ENCODE measurements at regions of chr17 and their contacts with region 1.

Region 1: DNA sequence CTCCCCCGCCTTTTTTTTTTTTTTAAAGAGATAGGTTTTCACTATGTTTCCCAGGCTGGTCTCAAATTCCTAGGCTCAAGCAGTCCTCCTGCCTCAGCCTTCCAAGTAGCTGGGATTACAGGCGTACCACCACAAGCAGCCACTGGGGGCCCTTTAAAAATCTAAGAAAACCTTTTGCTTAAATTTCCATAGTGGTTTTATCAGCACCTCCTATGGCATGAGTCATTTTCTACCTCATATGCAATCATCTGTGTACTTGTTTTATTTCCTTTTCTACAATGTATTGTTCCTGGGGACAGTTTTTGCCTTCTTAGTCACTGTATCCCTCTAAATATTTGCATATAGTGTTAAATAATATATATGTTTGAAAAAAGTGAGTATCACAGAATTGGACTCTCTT is 29.2 kb downstream of the GNA13 start:
- DNase-seq: peak; percentile 45
- ATAC-seq: peak; percentile 66
- H3K4me3 ChIP-seq: no peak overlapping the region
- H3K27ac ChIP-seq: peak overlapping the region; percentile 84
- H3K4me1 ChIP-seq: peaks cover 70% of the 10 kb centered on the region
- H3K27me3 ChIP-seq: no peaks in the 10 kb centered on the region
- CTCF ChIP-seq: peak; percentile 16 to 45 (median 42); a peak in 4 of 6 replicates
- EP300 ChIP-seq: peak; percentile 47; a peak in 2 of 4 replicates
- POLR2A ChIP-seq: no peak
- RAD21 ChIP-seq: peak; percentile 46

Region 2: GRCh38 chr17:64968652-64969501 is 58.4 kb before region 1 on chr17:
- CTCF ChIA-PET with region 1: interaction called, 6 read pairs
- POLR2A ChIA-PET with region 1: interaction called, 4 read pairs
- RAD21 ChIA-PET with region 1: interaction called, 20 read pairs
- SMC1A ChIA-PET with region 1: interaction called, 11 read pairs
- in situ Hi-C with region 1: no loop called
- intact Hi-C with region 1: no loop called
- DNase-seq: peak; percentile 20
- ATAC-seq: peak; percentile 66
- H3K4me3 ChIP-seq: no peak overlapping the region
- H3K27ac ChIP-seq: peak overlapping the region; percentile 45
- H3K4me1 ChIP-seq: peaks cover 42% of the 10 kb centered on the region
- H3K27me3 ChIP-seq: no peaks in the 10 kb centered on the region
- CTCF ChIP-seq: no peak
- EP300 ChIP-seq: no peak
- POLR2A ChIP-seq: no peak
- RAD21 ChIP-seq: no peak

Region 3: DNA sequence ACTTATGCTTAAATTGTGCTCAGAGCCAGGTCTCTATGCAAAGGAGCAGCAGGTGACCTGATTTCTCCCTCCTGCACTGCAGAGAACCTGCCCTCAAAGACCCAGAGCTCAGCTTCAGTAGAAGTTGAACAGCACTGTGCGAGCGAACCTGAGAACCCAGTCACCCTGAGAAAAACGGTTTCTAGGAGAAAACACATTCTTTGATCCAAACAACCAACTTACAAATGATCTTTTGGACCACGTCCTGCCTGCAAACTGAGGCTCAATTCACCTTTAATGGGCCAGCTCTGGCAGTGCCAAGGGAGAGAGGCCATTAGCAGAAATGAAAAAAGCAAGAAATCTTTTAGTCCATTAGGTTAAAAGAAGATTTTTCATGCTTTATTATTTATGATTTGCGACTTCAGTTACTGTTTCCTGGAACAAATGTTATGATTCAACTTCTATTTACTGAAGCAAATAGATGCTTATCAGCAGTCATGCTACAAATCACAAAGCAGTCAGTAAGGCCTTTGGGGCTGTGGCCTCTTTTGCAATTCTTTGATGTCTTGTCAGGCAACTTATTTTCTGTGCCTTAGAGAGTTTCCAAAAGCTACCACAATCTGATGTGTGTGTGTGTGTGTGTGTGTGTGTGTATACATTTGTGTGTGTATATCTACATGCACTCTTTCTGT is 42.3 kb before region 1 on chr17:
- CTCF ChIA-PET with region 1: interaction called, 8 read pairs
- POLR2A ChIA-PET with region 1: interaction called, 25 read pairs
- RAD21 ChIA-PET with region 1: interaction called, 71 read pairs
- SMC1A ChIA-PET with region 1: interaction called, 52 read pairs
- in situ Hi-C with region 1: no loop called
- intact Hi-C with region 1: no loop called
- DNase-seq: no peak
- ATAC-seq: peak; percentile 17
- H3K4me3 ChIP-seq: no peak overlapping the region
- H3K27ac ChIP-seq: peak overlapping the region; percentile 100
- H3K4me1 ChIP-seq: peaks cover 29% of the 10 kb centered on the region
- H3K27me3 ChIP-seq: no peaks in the 10 kb centered on the region
- CTCF ChIP-seq: no peak
- EP300 ChIP-seq: 0 out of 4 replicates have a peak, but pooled peaks of 1 of the 2 experiments have one; percentile 15
- POLR2A ChIP-seq: 0 out of 2 replicates have a peak, but pooled peaks have one; percentile 30
- RAD21 ChIP-seq: no peak

Region 4: GRCh38 chr17:65039336-65039988 is 12.2 kb after region 1 on chr17:
- CTCF ChIA-PET with region 1: interaction called, 7 read pairs
- POLR2A ChIA-PET with region 1: interaction called, 24 read pairs
- RAD21 ChIA-PET with region 1: interaction called, 27 read pairs
- SMC1A ChIA-PET with region 1: interaction called, 84 read pairs
- in situ Hi-C with region 1: no loop called
- intact Hi-C with region 1: loop called (anchors 2 kb)
- DNase-seq: peak; percentile 68
- ATAC-seq: peak; percentile 85
- H3K4me3 ChIP-seq: peak overlapping the region; percentile 10
- H3K27ac ChIP-seq: peak overlapping the region; percentile 87
- H3K4me1 ChIP-seq: peaks cover 56% of the 10 kb centered on the region
- H3K27me3 ChIP-seq: no peaks in the 10 kb centered on the region
- CTCF ChIP-seq: no peak
- EP300 ChIP-seq: peak; percentile 18 to 27; a peak in 2 of 4 replicates
- POLR2A ChIP-seq: no peak
- RAD21 ChIP-seq: no peak

Region 5: GRCh38 chr17:65055348-65056261 is 28.3 kb after region 1 on chr17:
- CTCF ChIA-PET with region 1: interaction called, 9 read pairs
- POLR2A ChIA-PET with region 1: interaction called, 6 read pairs
- RAD21 ChIA-PET with region 1: interaction called, 20 read pairs
- SMC1A ChIA-PET with region 1: interaction called, 84 read pairs
- in situ Hi-C with region 1: no loop called
- intact Hi-C with region 1: loop called (anchors 2 kb)
- DNase-seq: no peak
- ATAC-seq: peak; percentile 65
- H3K4me3 ChIP-seq: peak overlapping the region; percentile 98
- H3K27ac ChIP-seq: peak overlapping the region; percentile 95
- H3K4me1 ChIP-seq: peaks cover 5% of the 10 kb centered on the region; the same call in 1 of the 2 replicates
- H3K27me3 ChIP-seq: no peaks in the 10 kb centered on the region
- CTCF ChIP-seq: no peak
- EP300 ChIP-seq: no peak
- POLR2A ChIP-seq: no peak; the same call in 1 of the 2 replicates
- RAD21 ChIP-seq: no peak

Region 6: GRCh38 chr17:65071861-65072260 is 44.6 kb after region 1 on chr17:
- CTCF ChIA-PET with region 1: no interaction called
- POLR2A ChIA-PET with region 1: no interaction called
- RAD21 ChIA-PET with region 1: no interaction called
- SMC1A ChIA-PET with region 1: no interaction called
- in situ Hi-C with region 1: no loop called
- intact Hi-C with region 1: no loop called
- DNase-seq: no peak
- ATAC-seq: no peak
- H3K4me3 ChIP-seq: no peak overlapping the region
- H3K27ac ChIP-seq: no peak overlapping the region
- H3K4me1 ChIP-seq: no peaks in the 10 kb centered on the region
- H3K27me3 ChIP-seq: no peaks in the 10 kb centered on the region
- CTCF ChIP-seq: no peak
- EP300 ChIP-seq: no peak
- POLR2A ChIP-seq: no peak
- RAD21 ChIP-seq: no peak

Measured in GM12878 (cell line).